Activated CD4-positive, alpha-beta memory T cell treated with anti-CD3 and anti-CD28 coated beads for 36 hours (primary cell): ENCODE measurements at regions of chr5 and their contacts with region 1.

Region 1: GRCh38 chr5:157159209-157159751 is 6.8 kb downstream of the GARIN3 start:
- DNase-seq: peak; percentile 70
- H3K4me3 Mint-ChIP-seq: peak overlapping the region; percentile 72
- H3K27ac Mint-ChIP-seq: peak overlapping the region; percentile 98
- H3K4me1 Mint-ChIP-seq: peaks cover 82% of the 10 kb centered on the region
- H3K27me3 Mint-ChIP-seq: no peaks in the 10 kb centered on the region

Region 2: DNA sequence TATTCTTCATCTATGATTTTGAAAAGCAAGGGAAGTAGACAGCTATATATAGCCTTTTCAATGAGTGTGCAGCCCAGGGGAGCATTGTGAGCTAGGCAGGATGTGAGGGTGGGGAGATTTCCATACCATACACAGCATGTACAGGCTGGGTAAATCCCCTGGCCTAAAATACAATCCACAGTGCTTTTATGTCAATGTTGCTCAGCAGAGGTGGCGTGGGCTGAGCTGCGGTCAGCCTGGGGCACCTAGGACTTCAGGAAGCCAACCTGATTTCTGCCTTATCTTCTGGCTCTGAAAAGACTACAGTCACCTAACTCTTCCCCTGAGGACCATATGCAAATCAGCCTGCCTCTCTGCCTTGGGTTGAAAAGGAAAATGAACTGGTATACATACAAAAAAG is 13.1 kb after region 1 on chr5:
- CTCF ChIA-PET with region 1: interaction called, 9 read pairs
- POLR2A ChIA-PET with region 1: interaction called, 25 read pairs
- intact Hi-C with region 1: loop called (anchors 1 kb)
- DNase-seq: peak; percentile 96
- H3K4me3 Mint-ChIP-seq: peak overlapping the region; percentile 68
- H3K27ac Mint-ChIP-seq: peak overlapping the region; percentile 95
- H3K4me1 Mint-ChIP-seq: peaks cover 83% of the 10 kb centered on the region
- H3K27me3 Mint-ChIP-seq: no peaks in the 10 kb centered on the region

Region 3: GRCh38 chr5:157180374-157181264 is 21.3 kb after region 1 on chr5 and contains the start of gene ITK:
- CTCF ChIA-PET with region 1: interaction called, 3 read pairs
- POLR2A ChIA-PET with region 1: interaction called, 76 read pairs
- intact Hi-C with region 1: loop called (anchors 1 kb)
- DNase-seq: peak; percentile 58
- H3K4me3 Mint-ChIP-seq: peak within 1 kb of the TSS; percentile 99
- H3K27ac Mint-ChIP-seq: peak within 1 kb of the TSS; percentile 100
- H3K4me1 Mint-ChIP-seq: peaks cover 45% of the 10 kb centered on the region
- H3K27me3 Mint-ChIP-seq: no peaks in the 10 kb centered on the region
- total RNA-seq, gene ITK: 236 to 240 TPM

Region 4: DNA sequence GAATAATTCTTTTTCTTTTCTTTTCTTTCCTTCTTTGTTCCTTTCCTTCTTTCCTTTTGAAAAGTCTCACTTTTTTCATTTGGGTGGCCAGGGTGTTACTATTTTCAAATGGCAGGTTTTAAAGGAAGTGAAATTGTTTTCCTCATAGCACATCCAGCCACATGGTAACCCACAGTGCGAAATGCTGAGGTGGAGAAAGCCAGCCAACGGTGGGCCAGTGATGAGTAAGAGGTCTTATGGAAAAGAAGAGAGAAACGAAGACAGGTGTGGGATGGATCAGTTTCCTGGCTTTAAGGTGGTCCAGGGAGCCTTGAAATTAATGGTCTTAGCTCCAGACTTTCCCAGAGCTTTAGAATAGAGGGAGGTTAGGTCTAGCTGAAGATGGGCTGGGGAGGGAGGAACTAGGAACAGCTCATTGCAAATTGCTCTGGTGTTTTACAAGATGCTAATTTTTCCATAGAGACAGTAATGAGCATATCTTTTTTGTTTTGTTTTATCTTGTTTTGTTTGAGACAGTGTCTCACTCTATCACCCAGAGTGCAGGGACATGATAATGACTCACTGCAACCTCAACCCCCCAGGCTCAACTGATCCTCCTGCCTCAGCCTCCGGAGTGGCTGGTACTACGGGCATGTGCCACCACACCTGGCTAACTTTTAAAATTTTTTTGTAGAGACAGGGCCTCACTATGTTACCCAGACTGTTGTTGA is 39.2 kb after region 1 on chr5:
- CTCF ChIA-PET with region 1: no interaction called
- POLR2A ChIA-PET with region 1: interaction called, 3 read pairs
- intact Hi-C with region 1: loop called (anchors 5 kb)
- DNase-seq: peak; percentile 77
- H3K4me3 Mint-ChIP-seq: peak overlapping the region; percentile 53
- H3K27ac Mint-ChIP-seq: peak overlapping the region; percentile 95
- H3K4me1 Mint-ChIP-seq: peaks cover 94% of the 10 kb centered on the region
- H3K27me3 Mint-ChIP-seq: no peaks in the 10 kb centered on the region

Region 5: DNA sequence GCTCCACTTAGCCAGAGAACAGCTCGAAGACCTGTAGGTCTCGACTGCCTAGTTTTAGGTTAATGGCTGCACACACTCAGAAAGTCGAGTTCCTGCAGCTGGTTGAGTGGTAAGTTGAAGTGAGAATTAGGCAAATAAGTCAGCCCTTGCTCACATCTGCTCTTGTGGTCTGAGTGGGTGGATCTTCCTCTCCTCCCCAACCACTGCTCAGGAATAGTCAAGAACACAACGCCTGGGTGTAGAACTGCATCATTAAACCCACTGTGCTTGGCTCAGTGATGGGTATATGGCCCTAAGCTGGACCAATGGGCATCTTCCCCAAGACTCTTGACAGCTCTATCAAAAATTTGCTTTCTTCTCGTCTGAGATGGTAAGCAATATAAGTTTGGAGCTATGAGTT is 437.2 kb after region 1 on chr5:
- CTCF ChIA-PET with region 1: no interaction called
- POLR2A ChIA-PET with region 1: no interaction called
- intact Hi-C with region 1: loop called (anchors 5 kb)
- DNase-seq: peak; percentile 83
- H3K4me3 Mint-ChIP-seq: peak overlapping the region; percentile 11
- H3K27ac Mint-ChIP-seq: peak overlapping the region; percentile 91
- H3K4me1 Mint-ChIP-seq: peaks cover 95% of the 10 kb centered on the region
- H3K27me3 Mint-ChIP-seq: no peaks in the 10 kb centered on the region